CD14-positive monocyte (primary cell): ENCODE measurements at regions of chr4 and their contacts with region 1.

Region 1: DNA sequence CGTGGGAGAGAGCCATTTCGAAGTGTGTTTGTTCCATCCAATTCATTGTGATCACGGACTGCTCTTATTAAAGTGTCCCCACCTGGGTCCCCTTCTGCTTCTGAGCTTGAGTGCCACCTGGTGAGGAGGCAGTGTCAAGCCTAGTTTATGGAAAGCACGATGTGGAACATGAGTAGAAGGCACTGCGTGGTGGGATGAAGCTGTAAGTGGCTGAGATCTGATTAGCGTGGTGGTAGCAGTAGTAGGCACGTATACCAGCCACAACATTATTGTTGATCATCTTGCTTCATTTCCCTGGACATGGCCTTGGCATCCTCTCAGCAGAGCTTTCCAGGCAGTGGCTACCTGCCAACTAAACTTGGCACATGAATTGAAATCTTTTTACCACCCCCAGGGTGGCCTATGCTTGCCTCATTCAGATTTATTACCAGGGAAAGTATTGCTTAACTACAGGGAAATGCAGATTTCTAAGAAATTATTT is 46.4 kb downstream of the GPAT3 start:
- DNase-seq: no peak
- H3K4me3 ChIP-seq: peak overlapping the region in 1 of 3 experiments; percentile 25
- H3K4me3 Mint-ChIP-seq: peak overlapping the region; percentile 34 to 37
- H3K27ac ChIP-seq: peak overlapping the region; percentile 40 to 58
- H3K27ac Mint-ChIP-seq: peak overlapping the region; percentile 69 to 87 (median 83)
- H3K4me1 ChIP-seq: peaks cover 22 to 24% of the 10 kb centered on the region in 2 donors
- H3K4me1 Mint-ChIP-seq: peaks cover 24% of the 10 kb centered on the region
- H3K27me3 ChIP-seq: no peaks in the 10 kb centered on the region
- H3K27me3 Mint-ChIP-seq: no peaks in the 10 kb centered on the region
- CTCF ChIP-seq: peak; percentile 39

Region 2: DNA sequence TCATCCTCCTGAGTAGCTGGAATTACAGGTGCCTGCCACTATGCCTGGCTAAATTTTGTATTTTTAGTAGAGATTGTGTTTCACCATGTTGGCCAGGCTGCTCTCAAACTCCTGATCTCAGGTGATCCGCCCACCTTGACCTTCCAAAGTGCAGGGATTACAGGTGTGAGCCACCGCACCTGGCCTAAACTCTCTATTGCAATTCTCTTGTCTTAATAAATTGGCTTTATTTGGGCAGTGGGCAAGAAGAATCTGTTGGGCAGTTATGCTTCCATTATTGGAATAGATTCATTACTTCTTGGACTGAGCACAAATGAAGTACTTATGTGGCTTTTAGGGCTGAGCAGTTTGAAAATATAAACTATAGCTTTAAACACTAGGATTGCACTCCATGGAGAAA is 54.7 kb before region 1 on chr4:
- intact Hi-C with region 1: loop called (anchors 5 kb)
- DNase-seq: no peak
- H3K4me3 ChIP-seq: no peak overlapping the region
- H3K4me3 Mint-ChIP-seq: no peak overlapping the region
- H3K27ac ChIP-seq: no peak overlapping the region
- H3K27ac Mint-ChIP-seq: no peak overlapping the region
- H3K4me1 ChIP-seq: no peaks in the 10 kb centered on the region
- H3K4me1 Mint-ChIP-seq: peaks cover 4% of the 10 kb centered on the region
- H3K27me3 ChIP-seq: no peaks in the 10 kb centered on the region
- H3K27me3 Mint-ChIP-seq: peaks cover 12 to 14% (median 14%) of the 10 kb centered on the region in 3 donors
- CTCF ChIP-seq: no peak

Region 3: DNA sequence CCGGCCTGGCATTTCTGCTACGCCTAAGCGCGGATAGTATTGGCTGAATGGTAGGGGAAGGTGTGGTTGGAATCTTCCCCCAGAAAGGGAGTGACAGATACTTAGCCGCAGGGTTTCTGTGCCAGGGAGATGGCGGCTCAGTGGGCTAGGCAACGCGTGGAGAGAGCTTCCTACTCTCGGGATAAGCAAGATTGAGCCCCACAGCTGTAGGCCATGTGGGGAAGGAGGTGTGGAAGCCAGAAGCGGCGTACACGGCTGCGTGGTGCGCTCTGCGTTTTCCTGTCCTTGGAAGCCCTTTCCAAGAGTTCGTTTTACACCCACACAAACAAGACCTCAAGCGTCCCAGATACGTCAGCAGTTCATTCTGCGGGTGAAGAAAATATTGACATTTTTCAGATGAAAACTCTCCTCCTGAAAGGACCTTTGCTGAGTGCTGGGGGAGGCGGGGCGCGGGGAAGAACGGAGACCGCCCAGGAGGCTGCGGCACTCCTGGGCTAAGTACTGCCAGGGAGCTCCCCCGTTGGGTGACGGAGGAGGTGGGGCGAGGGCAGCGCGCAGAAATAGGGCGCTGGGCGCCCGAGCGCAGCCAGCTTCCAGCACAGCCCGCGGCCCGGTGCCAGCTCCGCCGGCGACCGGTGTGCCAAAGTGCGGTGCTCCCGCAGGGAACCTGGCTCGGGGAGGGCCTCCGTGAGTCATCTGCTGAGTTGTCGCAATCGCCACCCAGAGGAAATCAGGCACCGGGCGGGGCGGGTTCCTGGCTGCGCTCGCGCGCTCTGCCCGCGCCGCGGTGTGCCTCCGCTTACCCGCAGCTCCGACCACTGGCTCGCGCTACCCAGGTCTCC is 46.6 kb before region 1 on chr4 and contains the start of gene GPAT3:
- intact Hi-C with region 1: loop called in 1 of 2 experiments (anchors 5 kb)
- DNase-seq: peak; percentile 76 to 86 (median 84)
- H3K4me3 ChIP-seq: peak within 1 kb of the TSS; percentile 80 to 93 (median 84)
- H3K4me3 Mint-ChIP-seq: peak within 1 kb of the TSS; percentile 96 to 97
- H3K27ac ChIP-seq: peak within 1 kb of the TSS; percentile 60 to 96
- H3K27ac Mint-ChIP-seq: peak within 1 kb of the TSS; percentile 84 to 93 (median 91)
- H3K4me1 ChIP-seq: peaks cover 32 to 42% of the 10 kb centered on the region in 2 donors
- H3K4me1 Mint-ChIP-seq: peaks cover 42% of the 10 kb centered on the region
- H3K27me3 ChIP-seq: peaks cover 13 to 22% of the 10 kb centered on the region in 2 donors
- H3K27me3 Mint-ChIP-seq: peaks cover 21 to 35% (median 25%) of the 10 kb centered on the region in 3 donors
- CTCF ChIP-seq: no peak
- polyA plus RNA-seq, gene GPAT3: 20.9 to 46.2 (median 44.2) TPM

Region 4: DNA sequence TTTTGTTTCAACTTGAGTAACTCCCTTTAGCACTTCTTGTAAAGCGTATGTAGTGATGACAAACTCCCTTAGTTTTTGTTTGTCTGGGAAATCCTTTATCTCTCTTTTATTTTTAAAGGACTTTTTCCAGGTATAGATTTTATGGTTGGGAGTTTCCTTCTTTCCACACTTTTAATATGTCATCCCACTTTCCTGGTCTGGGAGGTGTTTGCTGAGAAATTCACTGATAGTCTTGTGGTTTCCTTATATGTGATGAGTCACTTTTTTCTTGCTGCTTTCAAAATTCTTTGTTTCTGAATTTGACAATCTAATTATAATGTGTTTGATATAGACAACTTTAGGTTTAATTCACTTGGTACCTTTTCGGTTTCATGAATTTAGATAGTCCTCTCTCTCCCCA is 307.5 kb after region 1 on chr4:
- intact Hi-C with region 1: no loop called
- DNase-seq: no peak
- H3K4me3 ChIP-seq: no peak overlapping the region
- H3K4me3 Mint-ChIP-seq: no peak overlapping the region
- H3K27ac ChIP-seq: no peak overlapping the region
- H3K27ac Mint-ChIP-seq: no peak overlapping the region
- H3K4me1 ChIP-seq: no peaks in the 10 kb centered on the region
- H3K4me1 Mint-ChIP-seq: peaks cover 2% of the 10 kb centered on the region
- H3K27me3 ChIP-seq: no peaks in the 10 kb centered on the region
- H3K27me3 Mint-ChIP-seq: peaks cover 0 to 3% (median 0%) of the 10 kb centered on the region in 3 donors
- CTCF ChIP-seq: no peak

Region 5: GRCh38 chr4:85102606-85103005 is 1520.3 kb after region 1 on chr4:
- intact Hi-C with region 1: no loop called
- DNase-seq: no peak
- H3K4me3 ChIP-seq: no peak overlapping the region
- H3K4me3 Mint-ChIP-seq: no peak overlapping the region
- H3K27ac ChIP-seq: no peak overlapping the region
- H3K27ac Mint-ChIP-seq: no peak overlapping the region
- H3K4me1 ChIP-seq: no peaks in the 10 kb centered on the region
- H3K4me1 Mint-ChIP-seq: no peaks in the 10 kb centered on the region
- H3K27me3 ChIP-seq: no peaks in the 10 kb centered on the region
- H3K27me3 Mint-ChIP-seq: peaks cover 0 to 2% (median 1%) of the 10 kb centered on the region in 3 donors
- CTCF ChIP-seq: no peak